Right ventricle myocardium inferior (tissue), 1 donor: ENCODE measurements at regions of chr2 and their contacts with region 1.

Region 1: GRCh38 chr2:226799181-226799975 is at the start of gene IRS1:
- DNase-seq: peak; percentile 84
- ATAC-seq: peak; percentile 56
- total RNA-seq, gene IRS1: 15.9 TPM

Region 2: DNA sequence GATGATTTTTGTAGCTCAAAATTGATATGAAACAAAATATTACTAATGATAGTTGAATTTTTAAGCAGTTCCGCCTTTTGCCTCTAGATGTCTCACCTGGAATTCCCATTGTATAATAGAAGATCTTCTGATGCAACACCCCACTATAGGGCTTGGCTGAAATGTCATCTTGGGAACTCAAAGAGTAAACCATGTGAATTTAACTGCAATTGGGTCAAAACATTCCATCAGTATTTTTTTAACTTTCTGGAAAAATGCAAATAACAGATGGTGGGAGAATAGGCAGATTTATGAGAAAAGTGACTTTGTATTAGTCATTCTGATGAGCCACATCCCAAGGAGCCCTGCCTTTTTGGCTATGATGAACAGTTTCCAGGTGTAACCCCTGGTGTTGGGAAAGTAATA is 909.9 kb before region 1 on chr2:
- intact Hi-C with region 1: loop called (anchors 2 kb)
- DNase-seq: no peak
- ATAC-seq: no peak

Region 3: GRCh38 chr2:226130192-226130591 is 669.2 kb before region 1 on chr2:
- intact Hi-C with region 1: loop called (anchors 5 kb)
- DNase-seq: no peak
- ATAC-seq: no peak

Region 4: GRCh38 chr2:226508683-226509082 is 290.7 kb before region 1 on chr2:
- intact Hi-C with region 1: no loop called
- DNase-seq: no peak
- ATAC-seq: no peak

Region 5: DNA sequence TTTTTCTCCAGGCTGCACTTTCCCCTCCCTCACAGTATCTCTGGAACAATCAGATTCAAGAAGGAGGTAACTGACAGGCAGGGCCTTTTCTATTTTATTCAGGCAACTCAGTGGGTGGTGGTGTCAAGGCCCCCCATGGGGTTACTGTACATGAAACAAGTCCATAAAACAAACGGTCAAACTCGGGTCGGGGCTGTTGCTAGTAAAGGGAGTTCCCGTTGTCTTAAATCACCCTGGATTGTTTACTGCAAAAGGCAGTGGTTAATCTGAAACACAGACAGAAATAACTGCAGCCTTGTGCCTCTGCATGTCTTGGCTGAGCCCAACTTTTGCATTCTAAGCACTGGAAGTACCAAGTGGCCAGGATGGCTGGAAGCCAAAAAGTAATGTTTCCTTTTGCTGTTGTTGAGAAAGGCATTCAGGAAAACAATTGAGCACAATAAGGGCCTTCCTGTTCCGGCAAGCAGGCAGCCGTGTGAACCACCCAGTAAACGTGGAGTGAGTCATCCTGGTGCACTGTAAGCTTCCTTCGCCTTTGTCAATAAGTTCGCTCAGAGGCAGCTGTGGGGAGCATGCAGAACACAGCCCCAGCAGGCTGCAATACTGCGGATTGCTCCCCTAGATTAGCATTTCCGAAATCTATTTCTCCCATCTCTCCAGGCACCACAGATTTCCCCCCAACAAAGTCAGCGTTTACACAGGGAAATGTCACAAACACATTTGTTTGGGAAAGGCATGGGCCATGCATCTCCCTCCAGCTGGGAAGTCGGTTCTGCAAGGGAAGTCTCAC is 149.3 kb before region 1 on chr2:
- intact Hi-C with region 1: loop called (anchors 5 kb)
- DNase-seq: no peak
- ATAC-seq: peak; percentile 84

Region 6: GRCh38 chr2:226742347-226742746 is 57.0 kb before region 1 on chr2:
- intact Hi-C with region 1: no loop called
- DNase-seq: peak; percentile 64
- ATAC-seq: peak; percentile 92

Region 7: DNA sequence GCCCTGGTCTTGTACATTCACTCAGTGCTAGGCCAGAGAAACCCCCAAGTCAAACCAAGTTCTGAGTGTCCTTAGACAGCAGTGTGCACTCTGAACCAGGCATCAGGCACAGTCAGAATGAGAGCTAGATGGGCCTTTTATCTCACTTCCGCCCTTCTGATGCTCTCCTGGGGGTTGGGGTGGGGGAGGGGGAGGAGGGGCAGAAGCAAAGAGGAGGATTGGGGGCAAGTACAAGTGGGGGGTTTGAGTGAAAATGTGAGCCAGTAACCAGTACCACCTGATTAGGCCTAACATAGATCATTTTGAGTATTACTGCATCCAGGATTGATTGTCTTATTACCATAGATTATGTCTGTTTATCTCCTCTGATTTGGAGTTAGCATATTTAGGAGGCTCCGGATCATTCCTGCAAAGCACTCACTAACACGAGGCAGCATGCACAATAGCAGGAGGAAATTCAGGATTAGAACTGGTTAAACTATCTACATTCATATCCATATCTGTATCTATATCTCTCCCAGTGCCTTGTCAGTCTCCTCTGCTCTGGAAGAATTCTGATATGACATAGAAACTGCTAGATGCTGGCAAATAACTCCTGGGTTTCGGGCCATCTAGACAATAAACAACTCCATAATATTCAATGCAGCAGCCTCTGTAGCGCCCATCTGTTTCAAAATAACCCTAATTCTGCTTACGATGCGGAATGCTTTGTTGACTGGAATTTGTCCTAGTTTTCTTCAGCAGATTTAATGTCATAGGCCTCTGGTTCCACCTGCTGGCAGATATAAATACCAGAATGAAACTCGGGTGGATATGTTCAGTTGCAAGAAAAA is 185.6 kb after region 1 on chr2:
- intact Hi-C with region 1: loop called (anchors 2 kb)
- DNase-seq: no peak
- ATAC-seq: peak; percentile 69